Common myeloid progenitor, CD34-positive (primary cell): ENCODE measurements at regions of chr12 and their contacts with region 1.

Region 1: GRCh38 chr12:121230538-121230907 is 20.6 kb downstream of the P2RX4 start:
- DNase-seq: no peak
- H3K4me3 ChIP-seq: no peak overlapping the region
- H3K27ac ChIP-seq: no peak overlapping the region
- H3K4me1 ChIP-seq: peaks cover 0 to 2% (median 0%) of the 10 kb centered on the region in 4 experiments
- H3K27me3 ChIP-seq: no peaks in the 10 kb centered on the region

Region 2: DNA sequence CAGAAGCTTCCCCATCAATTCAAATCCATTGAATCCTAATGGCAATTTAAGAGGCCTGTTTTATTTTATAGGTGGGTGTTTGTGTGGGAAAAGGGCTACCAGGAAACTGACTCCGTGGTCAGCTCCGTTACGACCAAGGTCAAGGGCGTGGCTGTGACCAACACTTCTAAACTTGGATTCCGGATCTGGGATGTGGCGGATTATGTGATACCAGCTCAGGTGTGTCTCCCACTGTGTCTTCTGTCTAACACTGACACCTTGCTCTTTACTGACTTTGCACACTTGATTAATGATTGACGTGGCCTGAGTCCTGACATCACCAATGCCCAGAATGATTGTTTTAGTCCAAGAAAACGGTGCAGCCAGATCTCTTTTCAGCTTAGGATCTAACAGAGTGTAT is 13.5 kb before region 1 on chr12:
- CTCF ChIA-PET with region 1: interaction called, 10 read pairs
- POLR2A ChIA-PET with region 1: no interaction called
- DNase-seq: no peak
- H3K4me3 ChIP-seq: no peak overlapping the region
- H3K27ac ChIP-seq: no peak overlapping the region
- H3K4me1 ChIP-seq: peaks cover 0 to 19% (median 4%) of the 10 kb centered on the region in 4 experiments
- H3K27me3 ChIP-seq: no peaks in the 10 kb centered on the region

Region 3: GRCh38 chr12:121240484-121241101 is 10.1 kb after region 1 on chr12:
- CTCF ChIA-PET with region 1: interaction called, 18 read pairs
- POLR2A ChIA-PET with region 1: no interaction called
- DNase-seq: peak; percentile 89 to 96 (median 92)
- H3K4me3 ChIP-seq: peak overlapping the region in 4 of 7 experiments; percentile 5 to 54 (median 30)
- H3K27ac ChIP-seq: peak overlapping the region; percentile 72 to 79
- H3K4me1 ChIP-seq: peaks cover 17 to 41% (median 37%) of the 10 kb centered on the region in 4 experiments
- H3K27me3 ChIP-seq: no peaks in the 10 kb centered on the region